Gastrocnemius medialis (tissue), 4 donors: ENCODE measurements at regions of chr10 and their contacts with region 1.

Region 1: GRCh38 chr10:3811291-3811870 is 26.4 kb upstream of the KLF6 start:
- DNase-seq: peak in 1 of 2 donors; percentile 61
- ATAC-seq: peak; percentile 33 to 58
- H3K4me3 ChIP-seq: peak overlapping the region in 3 of 4 donors; percentile 17 to 26 (median 18)
- H3K27ac ChIP-seq: peak overlapping the region; percentile 85 to 96 (median 90)
- H3K4me1 ChIP-seq: peaks cover 45 to 46% of the 10 kb centered on the region in 2 donors
- H3K27me3 ChIP-seq: no peaks in the 10 kb centered on the region
- CTCF ChIP-seq: no peak
- POLR2A ChIP-seq: peak in 1 of 2 donors; percentile 42

Region 2: DNA sequence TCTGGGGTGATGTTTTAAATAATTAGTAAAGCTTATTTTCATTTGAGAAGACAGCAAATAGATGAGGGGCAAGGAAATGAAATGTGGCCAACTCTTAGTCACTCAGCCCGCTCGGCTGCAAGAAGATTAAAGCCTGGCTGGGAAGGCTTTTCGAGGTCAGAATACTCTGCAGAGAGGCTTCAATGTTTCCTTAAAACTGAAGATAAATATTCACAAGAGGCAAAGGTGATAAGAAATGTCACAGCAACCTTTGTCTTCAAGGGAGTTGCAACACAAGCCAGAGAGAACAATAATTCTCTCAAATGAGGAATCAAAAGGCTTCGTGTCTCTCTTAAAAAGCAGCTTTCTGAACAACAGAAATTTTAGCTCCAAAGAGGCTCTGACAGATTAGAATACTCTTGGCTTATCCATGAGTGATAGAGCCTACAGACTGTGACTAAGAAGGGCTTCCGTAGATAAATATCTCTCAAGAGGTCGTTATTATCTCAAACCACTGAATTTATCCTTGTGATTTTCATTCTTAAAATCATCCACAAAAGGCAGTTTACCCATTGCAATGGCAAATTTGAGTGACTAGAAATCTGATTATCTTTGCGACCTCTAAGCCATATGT is 118.9 kb before region 1 on chr10:
- in situ Hi-C with region 1: no loop called
- intact Hi-C with region 1: no loop called
- DNase-seq: no peak
- ATAC-seq: no peak
- H3K4me3 ChIP-seq: no peak overlapping the region
- H3K27ac ChIP-seq: no peak overlapping the region
- H3K4me1 ChIP-seq: no peaks in the 10 kb centered on the region
- H3K27me3 ChIP-seq: no peaks in the 10 kb centered on the region
- CTCF ChIP-seq: no peak
- POLR2A ChIP-seq: no peak

Region 3: DNA sequence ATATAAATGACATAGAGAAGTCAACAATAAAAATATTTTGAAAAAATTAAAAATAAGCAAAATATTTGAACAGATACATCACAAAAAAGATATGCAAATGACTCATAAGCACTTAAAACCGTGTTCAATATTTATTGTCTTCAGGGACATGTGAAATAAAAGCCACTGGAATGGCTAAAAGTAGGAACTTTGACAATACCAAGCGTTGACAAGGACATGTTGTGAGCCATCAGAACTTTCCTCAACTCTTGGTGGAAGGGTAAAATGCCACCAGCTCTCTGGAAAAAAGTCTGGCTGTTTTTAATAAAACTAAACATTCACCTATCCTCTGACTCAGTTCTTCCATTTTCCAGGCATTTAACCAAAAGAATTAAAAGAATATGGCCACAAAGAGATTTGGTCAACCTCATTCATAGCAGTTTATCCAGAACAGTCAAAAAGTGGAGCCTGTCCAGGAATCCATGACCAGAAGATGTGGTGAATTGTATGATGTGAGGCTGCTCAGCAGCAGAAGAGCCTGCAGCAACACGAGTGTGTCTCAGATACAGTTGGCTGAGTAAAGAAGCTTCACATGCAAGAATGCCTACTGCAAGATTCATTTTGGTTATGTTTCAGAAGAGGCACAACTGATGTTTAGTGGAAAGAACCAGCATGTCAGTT is 19.3 kb before region 1 on chr10:
- in situ Hi-C with region 1: no loop called
- intact Hi-C with region 1: no loop called
- DNase-seq: no peak
- ATAC-seq: no peak
- H3K4me3 ChIP-seq: no peak overlapping the region
- H3K27ac ChIP-seq: no peak overlapping the region
- H3K4me1 ChIP-seq: no peaks in the 10 kb centered on the region
- H3K27me3 ChIP-seq: no peaks in the 10 kb centered on the region
- CTCF ChIP-seq: no peak
- POLR2A ChIP-seq: no peak

Region 4: DNA sequence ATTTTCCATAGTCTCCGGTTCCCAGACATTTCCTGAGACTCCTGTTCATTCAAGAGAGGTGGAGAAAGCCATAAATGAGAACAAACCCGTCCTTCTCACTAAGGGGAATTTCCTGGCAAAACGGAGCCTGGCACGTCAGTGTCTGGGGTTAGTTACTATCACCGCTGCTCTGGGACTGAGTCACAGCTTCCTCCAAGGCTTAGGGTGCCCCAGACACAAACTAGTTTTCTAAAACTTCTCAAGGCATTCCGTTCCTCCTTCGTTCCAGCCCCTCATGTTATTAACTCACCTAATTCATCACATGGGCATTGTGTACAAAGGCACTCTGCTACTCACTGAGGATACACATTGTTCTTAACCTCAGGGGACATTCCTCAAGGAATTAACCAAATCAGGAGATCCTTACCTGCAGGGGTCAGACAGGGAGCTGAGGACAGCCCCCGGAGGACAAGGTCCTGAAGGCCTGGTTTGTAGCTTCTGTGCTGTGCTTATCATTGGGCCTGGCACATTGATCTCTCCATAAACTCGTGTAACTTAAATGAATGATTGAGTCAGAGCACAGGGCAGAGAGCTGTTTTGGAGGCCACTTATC is 76.6 kb after region 1 on chr10:
- in situ Hi-C with region 1: no loop called
- intact Hi-C with region 1: loop called (anchors 5 kb)
- DNase-seq: peak; percentile 24 to 32
- ATAC-seq: peak; percentile 43 to 58
- H3K4me3 ChIP-seq: no peak overlapping the region
- H3K27ac ChIP-seq: peak overlapping the region; percentile 72 to 82 (median 78)
- H3K4me1 ChIP-seq: peaks cover 16 to 21% of the 10 kb centered on the region in 2 donors
- H3K27me3 ChIP-seq: no peaks in the 10 kb centered on the region
- CTCF ChIP-seq: no peak
- POLR2A ChIP-seq: no peak